WTC11 (cell line): ENCODE measurements at regions of chr1 and their contacts with region 1.

Region 1: DNA sequence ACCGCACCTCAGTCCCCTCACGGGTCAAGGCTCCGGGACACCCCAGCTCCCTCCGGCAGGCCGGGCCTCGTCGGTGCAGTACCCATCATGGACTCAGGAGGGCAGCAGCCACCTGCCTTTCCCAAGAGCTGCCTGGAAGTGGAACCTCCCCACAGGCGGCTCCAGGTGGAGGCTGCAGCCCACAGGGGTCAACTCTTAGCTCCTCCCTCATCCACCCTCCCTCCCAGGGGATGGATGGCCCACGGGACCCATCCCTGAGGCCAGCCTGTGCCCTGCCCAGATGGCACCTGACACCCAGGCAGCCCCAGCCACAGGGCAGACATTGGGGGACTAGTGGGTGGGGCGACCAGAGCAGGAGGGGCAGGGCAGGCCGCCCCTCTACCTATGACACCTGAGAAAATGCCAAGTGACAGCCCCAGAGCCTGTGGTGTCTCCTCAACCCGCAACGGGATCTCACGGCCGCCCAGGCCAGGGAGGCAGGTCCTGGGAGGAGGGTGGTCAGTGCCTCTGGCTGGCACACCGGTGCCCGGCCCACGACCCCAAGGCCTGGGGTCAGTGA is 1.2 kb upstream of the ARHGEF16 start:
- DNase-seq: peak; percentile 92
- ATAC-seq: peak; percentile 63
- H3K4me3 Mint-ChIP-seq: peak overlapping the region; percentile 49
- H3K27ac Mint-ChIP-seq: peak overlapping the region; percentile 70; the same call in 1 of the 2 replicates
- H3K4me1 Mint-ChIP-seq: peaks cover 9% of the 10 kb centered on the region
- H3K27me3 Mint-ChIP-seq: no peaks in the 10 kb centered on the region; the same call in 1 of the 2 replicates
- CTCF ChIP-seq: peak; percentile 78

Region 2: GRCh38 chr1:3275471-3276340 is 177.6 kb before region 1 on chr1:
- CTCF ChIA-PET with region 1: no interaction called
- POLR2A ChIA-PET with region 1: no interaction called
- DNase-seq: no peak
- ATAC-seq: no peak
- H3K4me3 Mint-ChIP-seq: no peak overlapping the region
- H3K27ac Mint-ChIP-seq: no peak overlapping the region
- H3K4me1 Mint-ChIP-seq: no peaks in the 10 kb centered on the region
- H3K27me3 Mint-ChIP-seq: no peaks in the 10 kb centered on the region; the same call in 1 of the 2 replicates
- CTCF ChIP-seq: no peak

Region 3: DNA sequence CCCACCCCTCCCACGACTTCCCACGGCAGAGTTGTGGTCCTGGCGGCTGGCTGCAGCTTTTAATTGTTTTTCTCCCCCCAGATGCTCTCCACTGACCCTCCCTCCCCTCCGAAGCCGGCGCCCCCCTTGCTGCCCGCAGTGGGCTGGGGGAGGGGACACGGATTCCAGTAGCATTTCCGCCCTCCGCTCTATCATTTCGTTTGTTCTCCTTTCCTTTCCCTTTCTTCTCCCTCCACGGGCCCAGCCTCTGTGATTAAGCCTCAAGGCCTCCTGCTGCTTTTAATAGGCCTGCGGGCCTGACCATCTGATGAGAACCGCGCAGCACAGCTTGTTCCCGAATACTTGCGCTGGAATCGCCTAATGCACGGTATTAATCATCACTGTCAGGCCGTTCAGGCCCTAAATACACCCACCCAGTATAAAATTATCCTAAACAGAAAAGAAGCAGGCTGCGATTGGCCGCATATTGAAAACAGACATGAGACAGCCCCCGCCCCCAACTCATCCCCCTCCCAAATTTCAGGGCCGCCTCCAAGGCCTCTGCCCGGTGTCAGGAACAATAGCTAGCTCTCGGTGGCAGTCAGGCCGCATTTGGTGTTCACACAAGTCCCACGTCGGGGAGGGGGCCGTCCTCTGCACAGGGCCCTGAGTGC is 100.9 kb before region 1 on chr1:
- CTCF ChIA-PET with region 1: no interaction called
- POLR2A ChIA-PET with region 1: no interaction called
- DNase-seq: peak; percentile 52
- ATAC-seq: peak; percentile 57
- H3K4me3 Mint-ChIP-seq: peak overlapping the region; percentile 66
- H3K27ac Mint-ChIP-seq: peak overlapping the region; percentile 83; the same call in 1 of the 2 replicates
- H3K4me1 Mint-ChIP-seq: peaks cover 21% of the 10 kb centered on the region
- H3K27me3 Mint-ChIP-seq: no peaks in the 10 kb centered on the region
- CTCF ChIP-seq: no peak

Region 4: DNA sequence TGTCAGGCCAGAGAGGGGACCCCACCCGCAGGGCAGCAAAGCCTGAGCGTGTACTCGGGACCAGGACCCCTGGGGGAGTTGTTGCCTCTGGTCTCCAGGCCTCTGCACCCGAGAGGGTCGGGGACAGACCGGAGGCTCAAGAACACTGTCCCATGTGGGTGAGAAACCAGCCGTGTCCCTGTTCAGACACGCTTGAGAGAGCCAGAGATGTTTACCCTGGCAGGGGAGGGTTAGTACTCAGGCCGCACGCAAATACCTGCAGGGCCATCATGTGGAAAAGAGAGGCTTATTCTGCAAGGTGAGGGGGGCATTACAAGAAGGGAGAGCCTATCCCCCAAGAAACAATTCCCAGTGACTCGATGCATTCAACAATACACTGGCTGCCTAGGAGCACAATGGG is 72.8 kb before region 1 on chr1:
- CTCF ChIA-PET with region 1: no interaction called
- POLR2A ChIA-PET with region 1: no interaction called
- DNase-seq: no peak
- ATAC-seq: no peak
- H3K4me3 Mint-ChIP-seq: no peak overlapping the region
- H3K27ac Mint-ChIP-seq: no peak overlapping the region
- H3K4me1 Mint-ChIP-seq: no peaks in the 10 kb centered on the region
- H3K27me3 Mint-ChIP-seq: no peaks in the 10 kb centered on the region
- CTCF ChIP-seq: no peak

Region 5: GRCh38 chr1:3423245-3423829 is 29.9 kb before region 1 on chr1:
- CTCF ChIA-PET with region 1: interaction called, 12 read pairs
- POLR2A ChIA-PET with region 1: no interaction called
- DNase-seq: no peak
- ATAC-seq: no peak
- H3K4me3 Mint-ChIP-seq: no peak overlapping the region
- H3K27ac Mint-ChIP-seq: no peak overlapping the region
- H3K4me1 Mint-ChIP-seq: no peaks in the 10 kb centered on the region
- H3K27me3 Mint-ChIP-seq: 0 out of 2 replicates have a peak, but pooled peaks cover 4% of the 10 kb centered on the region
- CTCF ChIP-seq: no peak

Region 6: GRCh38 chr1:3441410-3441847 is 11.9 kb before region 1 on chr1:
- CTCF ChIA-PET with region 1: interaction called, 24 read pairs
- POLR2A ChIA-PET with region 1: no interaction called
- DNase-seq: no peak
- ATAC-seq: no peak
- H3K4me3 Mint-ChIP-seq: no peak overlapping the region
- H3K27ac Mint-ChIP-seq: peak overlapping the region; percentile 53; the same call in 1 of the 2 replicates
- H3K4me1 Mint-ChIP-seq: no peaks in the 10 kb centered on the region
- H3K27me3 Mint-ChIP-seq: no peaks in the 10 kb centered on the region
- CTCF ChIP-seq: no peak

Region 7: DNA sequence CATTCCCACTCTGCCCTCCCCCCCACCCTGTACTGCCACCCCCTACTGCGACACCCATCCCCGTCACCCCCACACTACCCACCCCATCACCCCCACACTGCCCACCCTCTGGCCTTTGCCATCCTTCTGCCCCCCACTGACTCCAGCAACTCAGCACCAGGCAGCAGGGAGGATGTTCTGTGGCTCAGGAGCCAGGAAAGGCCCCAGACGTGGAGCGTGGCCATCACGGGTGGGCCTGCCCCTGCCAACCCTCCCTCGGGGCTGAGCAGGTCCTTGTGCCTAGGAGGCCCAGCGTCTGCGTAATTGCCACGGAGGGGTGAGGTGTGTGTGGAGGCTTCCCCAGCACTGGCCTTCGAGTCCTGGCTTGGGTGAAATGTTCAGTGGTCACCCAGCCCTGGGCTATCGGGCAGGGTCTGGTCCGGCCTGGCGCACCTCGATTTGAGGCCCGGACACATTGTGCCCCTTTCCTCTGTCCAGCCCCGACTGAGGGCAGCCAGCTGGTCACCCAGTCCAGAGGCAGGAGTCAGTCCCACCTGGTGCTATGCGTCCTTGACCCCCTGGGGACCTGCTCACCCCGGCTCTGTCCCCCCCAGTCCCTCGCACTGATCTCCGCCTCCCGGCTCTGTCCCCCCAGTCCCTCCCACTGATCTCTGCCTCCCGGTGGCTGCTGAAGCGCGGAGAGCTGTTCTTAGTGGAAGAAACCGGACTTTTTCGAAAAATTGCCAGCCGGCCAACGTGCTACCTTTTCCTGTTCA is 24.1 kb after region 1 on chr1:
- CTCF ChIA-PET with region 1: interaction called, 165 read pairs
- POLR2A ChIA-PET with region 1: interaction called, 11 read pairs
- DNase-seq: no peak
- ATAC-seq: no peak
- H3K4me3 Mint-ChIP-seq: no peak overlapping the region
- H3K27ac Mint-ChIP-seq: no peak overlapping the region
- H3K4me1 Mint-ChIP-seq: no peaks in the 10 kb centered on the region
- H3K27me3 Mint-ChIP-seq: no peaks in the 10 kb centered on the region
- CTCF ChIP-seq: no peak

Region 8: DNA sequence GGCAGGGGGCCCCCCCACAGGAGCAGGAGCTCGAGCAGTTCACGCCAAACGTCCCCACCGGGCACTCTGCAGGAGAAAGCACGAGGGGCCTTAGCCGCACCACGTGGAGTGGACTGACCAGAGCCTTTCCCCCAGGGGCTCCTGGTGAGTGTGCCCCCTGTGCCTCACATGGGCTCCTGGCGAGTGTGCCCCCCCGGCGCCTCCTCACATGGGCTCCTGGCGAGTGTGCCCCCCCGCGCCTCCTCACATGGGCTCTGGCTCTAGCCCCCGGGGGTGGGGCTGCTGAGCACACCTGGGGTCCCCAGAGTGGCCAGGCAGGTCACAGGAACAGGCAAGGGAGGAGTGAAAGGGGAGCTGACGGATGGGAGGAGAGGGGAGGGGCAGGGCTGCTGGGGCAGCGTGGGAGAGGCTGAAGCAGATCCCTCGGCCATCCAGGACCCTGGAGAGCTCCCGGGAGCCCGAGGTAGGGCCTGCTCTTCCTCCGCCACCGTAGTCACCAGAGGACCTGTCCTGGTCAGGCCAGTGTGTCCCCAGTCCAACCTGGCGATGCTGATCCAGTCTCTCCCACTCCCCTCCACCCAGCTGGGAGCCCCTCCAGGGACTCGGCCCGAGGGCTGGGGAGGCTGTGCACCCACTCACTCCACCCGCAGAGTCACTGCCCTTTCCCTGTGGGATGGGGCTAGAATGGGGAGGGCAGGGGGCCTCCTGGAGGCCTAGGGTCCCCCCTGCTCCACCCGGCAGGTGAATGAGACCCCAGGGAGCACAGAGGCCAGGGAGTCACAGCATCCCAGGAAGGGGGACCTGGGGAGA is 48.8 kb after region 1 on chr1:
- CTCF ChIA-PET with region 1: interaction called, 19 read pairs
- POLR2A ChIA-PET with region 1: no interaction called
- DNase-seq: peak; percentile 90
- ATAC-seq: peak; percentile 90
- H3K4me3 Mint-ChIP-seq: no peak overlapping the region
- H3K27ac Mint-ChIP-seq: no peak overlapping the region
- H3K4me1 Mint-ChIP-seq: no peaks in the 10 kb centered on the region
- H3K27me3 Mint-ChIP-seq: no peaks in the 10 kb centered on the region
- CTCF ChIP-seq: no peak

Region 9: GRCh38 chr1:3586932-3587678 is 133.8 kb after region 1 on chr1:
- CTCF ChIA-PET with region 1: interaction called, 11 read pairs
- POLR2A ChIA-PET with region 1: no interaction called
- DNase-seq: no peak
- ATAC-seq: no peak
- H3K4me3 Mint-ChIP-seq: no peak overlapping the region
- H3K27ac Mint-ChIP-seq: peak overlapping the region; percentile 65
- H3K4me1 Mint-ChIP-seq: 0 out of 2 replicates have a peak, but pooled peaks cover 2% of the 10 kb centered on the region
- H3K27me3 Mint-ChIP-seq: no peaks in the 10 kb centered on the region
- CTCF ChIP-seq: no peak

Region 10: GRCh38 chr1:3618881-3619671 is 165.8 kb after region 1 on chr1:
- CTCF ChIA-PET with region 1: interaction called, 57 read pairs
- POLR2A ChIA-PET with region 1: no interaction called
- DNase-seq: peak; percentile 78
- ATAC-seq: peak; percentile 81
- H3K4me3 Mint-ChIP-seq: no peak overlapping the region
- H3K27ac Mint-ChIP-seq: no peak overlapping the region
- H3K4me1 Mint-ChIP-seq: peaks cover 24% of the 10 kb centered on the region
- H3K27me3 Mint-ChIP-seq: peaks cover 8% of the 10 kb centered on the region
- CTCF ChIP-seq: peak; percentile 77